Transverse colon (tissue), 4 donors: ENCODE measurements at regions of chr2 and their contacts with region 1.

Region 1: GRCh38 chr2:151289369-151290088 is at the start of gene NMI:
- DNase-seq: peak; percentile 79
- H3K4me3 ChIP-seq: peak within 1 kb of the TSS; percentile 58 to 85 (median 76)
- H3K27ac ChIP-seq: peak within 1 kb of the TSS; percentile 92 to 98 (median 94)
- H3K4me1 ChIP-seq: peaks cover 5 to 24% (median 9%) of the 10 kb centered on the region in 4 donors
- H3K27me3 ChIP-seq: no peaks in the 10 kb centered on the region
- CTCF ChIP-seq: no peak
- EP300 ChIP-seq: no peak
- POLR2A ChIP-seq: peak; percentile 64
- total RNA-seq, gene NMI: 1.6 to 23.9 (median 19.3) TPM

Region 2: GRCh38 chr2:151409601-151410484 is 120.3 kb after region 1 on chr2 and contains the start of gene RIF1:
- in situ Hi-C with region 1: loop called in 1 of 4 experiments (anchors 10 kb)
- intact Hi-C with region 1: no loop called
- DNase-seq: peak; percentile 89
- H3K4me3 ChIP-seq: peak within 1 kb of the TSS; percentile 73 to 97 (median 87)
- H3K27ac ChIP-seq: peak within 1 kb of the TSS; percentile 88 to 93 (median 89)
- H3K4me1 ChIP-seq: peaks cover 4 to 15% (median 11%) of the 10 kb centered on the region in 4 donors
- H3K27me3 ChIP-seq: no peaks in the 10 kb centered on the region
- CTCF ChIP-seq: peak; percentile 63 to 84 (median 71)
- EP300 ChIP-seq: no peak
- POLR2A ChIP-seq: peak; percentile 42
- total RNA-seq, gene RIF1: 10.8 to 43.2 (median 17.9) TPM